ENCODE measurements at regions of chr7 and their contacts with region 1.

Region 1: DNA sequence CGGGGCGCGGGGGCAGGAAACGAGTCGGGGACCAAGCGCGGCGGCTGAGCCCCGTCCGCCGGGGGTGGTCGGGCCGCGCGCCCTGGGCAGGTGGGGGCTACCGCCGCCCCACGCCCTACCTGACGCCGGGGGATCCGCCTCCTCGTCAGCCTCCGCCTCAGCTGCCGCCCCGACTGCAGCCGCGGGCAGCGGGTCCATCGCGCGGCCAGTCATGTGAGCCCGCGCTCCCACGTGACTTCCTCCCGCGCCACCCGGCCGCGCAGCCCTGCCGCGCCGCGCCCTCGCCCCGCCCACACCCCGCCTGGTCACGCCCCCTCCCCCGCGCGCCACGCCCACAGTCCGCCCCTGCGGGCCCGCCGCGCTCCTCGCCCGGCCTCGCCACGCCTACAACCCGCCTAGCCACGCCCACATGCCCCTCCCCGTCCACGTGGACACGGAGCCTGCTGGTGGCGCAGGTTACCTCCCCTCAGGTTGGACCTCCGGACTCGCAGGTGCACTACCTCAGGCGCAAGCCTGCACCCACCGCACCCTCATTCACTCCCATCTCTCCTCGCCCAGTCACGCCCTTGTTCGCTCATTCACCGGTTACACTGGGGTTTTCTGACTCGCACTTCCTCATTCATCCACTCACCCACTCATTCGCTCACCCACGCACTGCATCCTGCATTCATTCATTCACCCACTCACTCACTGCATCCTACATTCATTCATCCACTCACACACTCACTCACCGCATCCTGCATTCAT is at the start of gene SNX8:
- DNase-seq: peak; percentile 89 to 96 (median 89)
- ATAC-seq: peak; percentile 90 to 99 (median 98)
- H3K4me3 ChIP-seq: peak within 1 kb of the TSS; percentile 44 to 97 (median 93)
- H3K27ac ChIP-seq: peak within 1 kb of the TSS; percentile 10 to 88 (median 66)
- H3K4me1 ChIP-seq: peaks cover 0 to 26% (median 5%) of the 10 kb centered on the region in 12 donors
- H3K27me3 ChIP-seq: no peaks in the 10 kb centered on the region
- CTCF ChIP-seq: peak in 1 of 12 donors; percentile 4
- POLR2A ChIP-seq: peak in 1 of 2 donors; percentile 66
- total RNA-seq, gene SNX8: 5.4 to 44.6 (median 21.5) TPM

Region 2: DNA sequence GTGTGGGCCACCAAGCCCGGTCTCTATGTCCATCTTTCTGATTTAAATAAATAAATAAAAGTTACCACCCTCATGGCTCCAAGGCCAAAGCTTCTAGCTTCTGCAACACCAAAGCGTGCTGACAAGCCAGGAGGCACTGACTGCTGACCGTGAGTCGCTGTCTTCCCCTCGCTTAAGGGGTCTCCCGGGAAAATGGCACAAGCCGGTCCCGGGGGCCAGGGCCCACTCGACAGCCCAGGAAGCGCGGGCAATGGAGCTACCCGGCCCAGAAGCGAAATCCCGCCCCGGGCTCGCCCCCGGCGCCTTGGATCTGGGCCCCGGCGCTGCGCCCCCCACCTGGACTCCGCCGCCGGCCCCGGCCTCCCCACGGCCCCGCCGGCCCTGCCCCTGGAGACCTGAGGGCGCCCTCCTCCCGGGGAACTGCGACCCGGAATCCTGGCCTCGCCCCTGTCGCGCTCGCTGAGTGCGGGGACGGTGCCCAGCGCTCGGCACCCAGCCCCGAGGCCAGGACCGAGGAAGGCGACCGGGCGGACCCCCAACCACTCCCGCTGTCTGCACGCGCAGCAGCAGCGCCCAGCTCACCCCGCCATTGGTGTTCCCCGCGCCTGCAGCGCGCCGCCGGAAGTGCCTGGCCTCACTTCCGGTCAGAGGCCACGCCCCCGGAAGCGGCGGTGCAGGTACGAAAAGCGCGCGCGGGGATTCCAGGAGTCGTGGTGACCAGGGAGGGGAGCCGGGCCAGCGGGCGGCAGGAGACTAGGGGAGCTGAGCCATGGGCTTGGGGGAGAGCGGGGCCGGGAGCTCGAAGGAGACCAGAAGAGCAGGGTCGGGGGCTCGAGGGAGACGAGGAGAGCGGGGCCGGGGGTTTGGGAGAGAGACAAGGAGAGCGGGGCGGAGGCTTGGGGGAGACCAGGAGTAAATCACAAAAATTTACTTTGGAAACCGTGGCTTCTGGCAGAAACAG is 72.5 kb before region 1 on chr7 and contains the starts of genes MRM2 and NUDT1:
- intact Hi-C with region 1: loop called in 4 of 10 experiments (anchors 5 to 10 kb)
- DNase-seq: peak; percentile 82 to 92 (median 84)
- ATAC-seq: peak; percentile 67 to 94 (median 91)
- H3K4me3 ChIP-seq: peak within 1 kb of the TSS; percentile 80 to 100 (median 91)
- H3K27ac ChIP-seq: peak within 1 kb of the TSS in 11 of 12 donors; percentile 26 to 81 (median 68)
- H3K4me1 ChIP-seq: peaks cover 0 to 61% (median 17%) of the 10 kb centered on the region in 12 donors
- H3K27me3 ChIP-seq: no peaks in the 10 kb centered on the region
- CTCF ChIP-seq: peak in 1 of 12 donors; percentile 22
- POLR2A ChIP-seq: peak in 1 of 2 donors; percentile 58
- total RNA-seq, gene MRM2: 14.2 to 22.3 (median 20.3) TPM
- total RNA-seq, gene NUDT1: 9.8 to 18.4 (median 12.1) TPM

Region 3: GRCh38 chr7:2248984-2249694 is 65.2 kb before region 1 on chr7:
- intact Hi-C with region 1: loop called in 4 of 10 experiments (anchors 5 to 10 kb)
- DNase-seq: peak; percentile 70 to 82 (median 77)
- ATAC-seq: peak; percentile 67 to 89 (median 82)
- H3K4me3 ChIP-seq: peak overlapping the region in 2 of 12 donors; percentile 15 to 32
- H3K27ac ChIP-seq: peak overlapping the region in 7 of 12 donors; percentile 31 to 85 (median 59)
- H3K4me1 ChIP-seq: peaks cover 0 to 37% (median 3%) of the 10 kb centered on the region in 12 donors
- H3K27me3 ChIP-seq: no peaks in the 10 kb centered on the region
- CTCF ChIP-seq: peak in 3 of 12 donors; percentile 26 to 34 (median 33)
- POLR2A ChIP-seq: no peak

Region 4: DNA sequence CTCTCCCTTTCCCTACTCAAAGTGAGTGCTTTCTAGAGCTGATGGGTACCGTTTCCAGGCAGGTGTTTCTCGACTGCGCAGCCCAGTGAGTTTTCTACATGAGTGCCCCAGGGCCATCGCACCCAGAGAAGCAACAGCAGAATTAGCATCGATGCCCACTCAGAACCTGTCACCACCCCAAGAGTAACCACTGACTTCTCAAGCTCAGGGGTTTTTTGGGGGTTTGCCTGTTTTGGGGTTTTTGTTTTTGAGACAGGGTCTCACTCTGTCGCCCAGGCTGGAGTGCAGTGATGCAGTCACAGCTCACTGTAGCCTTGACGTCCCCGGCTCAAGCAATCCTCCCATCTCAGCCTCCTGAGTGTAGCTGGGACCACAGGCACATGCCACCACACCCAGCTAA is 25.9 kb before region 1 on chr7:
- intact Hi-C with region 1: no loop called
- DNase-seq: peak in 1 of 5 donors; percentile 6
- ATAC-seq: peak in 1 of 4 donors; percentile 7
- H3K4me3 ChIP-seq: no peak overlapping the region
- H3K27ac ChIP-seq: no peak overlapping the region
- H3K4me1 ChIP-seq: no peaks in the 10 kb centered on the region
- H3K27me3 ChIP-seq: no peaks in the 10 kb centered on the region
- CTCF ChIP-seq: no peak
- POLR2A ChIP-seq: no peak

Region 5: DNA sequence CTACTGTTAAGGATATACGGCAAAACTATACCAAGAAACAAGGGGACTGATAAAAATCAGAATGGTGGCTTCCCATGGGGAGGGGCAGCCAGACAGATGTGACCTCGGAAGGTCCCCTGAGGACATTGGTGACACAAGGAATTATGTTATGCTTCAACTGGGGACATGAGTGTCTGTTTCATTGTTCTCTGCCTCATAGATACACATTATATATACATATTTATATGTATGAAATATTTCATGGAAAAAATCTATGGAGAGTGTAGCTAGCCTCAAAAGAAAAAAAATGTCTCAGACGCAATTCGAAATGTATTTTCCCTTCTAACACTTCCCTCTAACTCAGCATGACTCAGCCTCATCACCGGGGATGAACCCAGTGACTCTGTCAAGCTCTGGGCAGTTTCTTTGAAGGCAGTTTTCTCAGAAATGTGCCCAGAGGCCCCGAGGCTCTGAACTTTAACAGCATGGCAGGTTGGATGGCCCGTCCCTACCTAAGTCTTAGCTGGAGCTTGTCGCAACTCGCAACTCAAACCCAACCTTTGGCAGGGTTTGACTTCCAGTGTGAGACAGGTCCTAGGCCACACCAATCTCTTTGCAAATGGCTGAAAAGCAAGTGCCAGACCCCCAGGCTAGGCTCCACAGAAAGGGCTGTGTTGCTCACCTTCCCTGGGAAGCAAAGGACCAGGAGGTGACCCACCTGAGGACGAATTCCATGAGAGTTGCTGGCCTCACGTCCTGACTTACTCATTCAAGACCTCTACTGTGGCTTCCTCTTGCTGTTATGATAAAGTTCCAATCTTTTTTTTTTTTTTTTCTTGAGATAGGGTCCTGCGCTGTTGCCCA is 642.4 kb after region 1 on chr7:
- intact Hi-C with region 1: no loop called
- DNase-seq: no peak
- ATAC-seq: peak in 1 of 4 donors; percentile 13
- H3K4me3 ChIP-seq: no peak overlapping the region
- H3K27ac ChIP-seq: peak overlapping the region in 1 of 12 donors; percentile 62
- H3K4me1 ChIP-seq: peaks cover 0 to 53% (median 0%) of the 10 kb centered on the region in 12 donors
- H3K27me3 ChIP-seq: peaks cover 0 to 42% (median 0%) of the 10 kb centered on the region in 9 donors
- CTCF ChIP-seq: no peak
- POLR2A ChIP-seq: no peak

Measured in heart left ventricle (tissue), 16 donors.